ENCODE measurements at regions of chr19 and their contacts with region 1.

Region 1: GRCh38 chr19:45439569-45440254 is 16.0 kb upstream of the ERCC1 start:
- DNase-seq: peak; percentile 95
- ATAC-seq: peak; percentile 42
- H3K4me3 ChIP-seq: peak overlapping the region in 4 of 5 experiments; percentile 21 to 80 (median 60)
- H3K4me3 Mint-ChIP-seq: peak overlapping the region; percentile 85
- H3K27ac ChIP-seq: peak overlapping the region; percentile 48 to 82
- H3K27ac Mint-ChIP-seq: peak overlapping the region; percentile 91
- H3K4me1 ChIP-seq: peaks cover 31 to 36% of the 10 kb centered on the region in 2 donors
- H3K4me1 Mint-ChIP-seq: peaks cover 31% of the 10 kb centered on the region
- H3K27me3 ChIP-seq: no peaks in the 10 kb centered on the region
- H3K27me3 Mint-ChIP-seq: no peaks in the 10 kb centered on the region
- CTCF ChIP-seq: peak; percentile 100

Region 2: DNA sequence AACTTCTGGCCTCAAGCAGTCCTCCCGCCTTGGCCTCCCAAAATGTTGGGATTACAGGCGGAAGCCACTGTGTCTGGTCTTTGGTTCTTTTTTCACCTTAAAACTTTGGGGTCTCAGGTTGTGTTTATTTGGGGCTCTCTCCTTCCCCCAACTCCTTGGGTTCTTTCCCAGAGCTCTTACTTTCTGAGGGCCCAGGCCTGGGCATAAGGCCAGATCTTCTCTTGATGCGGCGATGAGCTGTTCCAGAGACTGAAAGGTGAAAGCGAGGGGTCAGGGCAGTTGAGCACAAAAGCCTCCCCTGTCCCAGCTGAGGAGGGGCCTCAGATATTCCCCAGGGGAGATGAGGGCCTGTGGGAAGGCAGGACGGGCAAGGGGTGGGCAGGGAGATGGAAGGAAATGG is 26.2 kb before region 1 on chr19:
- CTCF ChIA-PET with region 1: interaction called, 12 read pairs
- POLR2A ChIA-PET with region 1: no interaction called
- intact Hi-C with region 1: loop called (anchors 5 kb)
- DNase-seq: no peak
- ATAC-seq: no peak
- H3K4me3 ChIP-seq: no peak overlapping the region
- H3K4me3 Mint-ChIP-seq: no peak overlapping the region
- H3K27ac ChIP-seq: no peak overlapping the region
- H3K27ac Mint-ChIP-seq: no peak overlapping the region
- H3K4me1 ChIP-seq: peaks cover under 1 to 9% of the 10 kb centered on the region in 2 donors
- H3K4me1 Mint-ChIP-seq: peaks cover 10% of the 10 kb centered on the region
- H3K27me3 ChIP-seq: no peaks in the 10 kb centered on the region
- H3K27me3 Mint-ChIP-seq: no peaks in the 10 kb centered on the region
- CTCF ChIP-seq: no peak

Region 3: DNA sequence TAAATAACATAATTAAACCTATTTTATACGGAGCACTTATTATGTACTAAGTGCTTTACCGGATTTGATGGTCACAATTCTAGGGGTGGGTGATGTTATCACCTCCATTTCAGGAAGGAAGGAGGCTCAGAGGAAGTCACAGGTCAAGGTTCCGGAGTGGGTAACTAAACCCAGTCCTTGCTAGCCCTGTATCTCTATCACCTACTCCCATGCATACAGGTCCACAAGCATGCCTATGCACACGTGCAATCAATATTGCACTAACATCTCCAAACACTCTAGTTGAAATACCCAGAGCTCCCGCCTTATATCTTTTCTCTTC is 10.3 kb after region 1 on chr19:
- CTCF ChIA-PET with region 1: interaction called, 16 read pairs
- POLR2A ChIA-PET with region 1: interaction called, 8 read pairs
- intact Hi-C with region 1: no loop called
- DNase-seq: no peak
- ATAC-seq: peak; percentile 9
- H3K4me3 ChIP-seq: peak overlapping the region; percentile 13 to 89 (median 63)
- H3K4me3 Mint-ChIP-seq: peak overlapping the region; percentile 92
- H3K27ac ChIP-seq: peak overlapping the region; percentile 88 to 91
- H3K27ac Mint-ChIP-seq: peak overlapping the region; percentile 87
- H3K4me1 ChIP-seq: peaks cover 17 to 41% of the 10 kb centered on the region in 2 donors
- H3K4me1 Mint-ChIP-seq: peaks cover 57% of the 10 kb centered on the region
- H3K27me3 ChIP-seq: no peaks in the 10 kb centered on the region
- H3K27me3 Mint-ChIP-seq: no peaks in the 10 kb centered on the region
- CTCF ChIP-seq: no peak

Region 4: DNA sequence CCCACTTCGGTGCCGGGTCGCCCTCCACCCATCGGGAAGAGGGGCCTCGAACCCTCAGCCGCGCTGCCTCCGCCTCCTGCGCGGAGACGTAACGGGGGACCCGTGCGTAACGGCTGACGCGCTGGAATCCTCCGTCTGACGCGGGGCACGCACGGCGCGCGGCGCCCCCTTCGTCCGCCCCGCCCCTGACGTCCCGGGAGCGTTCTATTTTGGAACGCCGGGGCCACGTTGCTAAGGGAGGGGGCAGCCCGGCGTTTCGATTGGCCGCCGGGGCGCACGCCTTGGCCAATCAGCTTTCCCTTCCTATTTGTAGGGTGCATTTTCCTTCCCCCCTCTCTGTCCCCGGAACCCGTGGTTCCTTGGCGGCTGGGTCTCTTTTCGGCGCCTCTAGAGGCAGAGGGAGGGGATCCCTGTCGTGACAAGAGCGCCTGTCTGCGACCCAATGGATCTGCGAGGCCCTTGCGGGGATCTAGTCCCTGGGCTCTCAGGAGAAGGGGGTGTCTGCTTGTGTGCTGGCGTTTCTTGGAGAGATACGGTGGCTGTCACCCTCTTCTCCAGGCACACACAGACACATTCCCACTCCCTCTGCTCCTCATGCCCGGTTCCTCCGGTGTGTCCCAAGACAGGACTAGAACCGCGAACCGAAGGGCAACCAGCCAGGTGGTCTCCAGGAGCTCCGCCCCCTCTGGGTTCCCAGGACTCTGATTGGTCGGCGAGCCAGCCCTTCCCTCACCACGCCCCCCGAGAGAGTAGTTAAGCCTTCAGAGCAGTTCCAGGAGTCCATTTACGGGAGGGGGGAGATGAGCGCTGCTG is 29.6 kb after region 1 on chr19:
- CTCF ChIA-PET with region 1: interaction called, 453 read pairs
- POLR2A ChIA-PET with region 1: interaction called, 45 read pairs
- intact Hi-C with region 1: loop called (anchors 1 kb)
- DNase-seq: peak; percentile 97
- ATAC-seq: peak; percentile 57
- H3K4me3 ChIP-seq: peak overlapping the region; percentile 59 to 100 (median 95)
- H3K4me3 Mint-ChIP-seq: peak overlapping the region; percentile 92
- H3K27ac ChIP-seq: peak overlapping the region; percentile 96 to 100
- H3K27ac Mint-ChIP-seq: peak overlapping the region; percentile 95
- H3K4me1 ChIP-seq: peaks cover 38 to 57% of the 10 kb centered on the region in 2 donors
- H3K4me1 Mint-ChIP-seq: peaks cover 50% of the 10 kb centered on the region
- H3K27me3 ChIP-seq: peaks cover 0 to 33% (median 15%) of the 10 kb centered on the region in 4 experiments
- H3K27me3 Mint-ChIP-seq: peaks cover 24% of the 10 kb centered on the region
- CTCF ChIP-seq: no peak

Region 5: GRCh38 chr19:45485305-45486077 is 45.8 kb after region 1 on chr19:
- CTCF ChIA-PET with region 1: interaction called, 453 read pairs
- POLR2A ChIA-PET with region 1: interaction called, 5 read pairs
- intact Hi-C with region 1: loop called (anchors 1 kb)
- DNase-seq: peak; percentile 96
- ATAC-seq: peak; percentile 99
- H3K4me3 ChIP-seq: peak overlapping the region; percentile 38 to 80 (median 63)
- H3K4me3 Mint-ChIP-seq: peak overlapping the region; percentile 95
- H3K27ac ChIP-seq: no peak overlapping the region
- H3K27ac Mint-ChIP-seq: peak overlapping the region; percentile 76
- H3K4me1 ChIP-seq: peaks cover 3 to 9% of the 10 kb centered on the region in 2 donors
- H3K4me1 Mint-ChIP-seq: peaks cover 11% of the 10 kb centered on the region
- H3K27me3 ChIP-seq: no peaks in the 10 kb centered on the region
- H3K27me3 Mint-ChIP-seq: no peaks in the 10 kb centered on the region
- CTCF ChIP-seq: peak; percentile 92

Region 6: GRCh38 chr19:45506246-45506990 is 66.7 kb after region 1 on chr19:
- CTCF ChIA-PET with region 1: interaction called, 12 read pairs
- POLR2A ChIA-PET with region 1: no interaction called
- intact Hi-C with region 1: no loop called
- DNase-seq: peak; percentile 98
- ATAC-seq: peak; percentile 74
- H3K4me3 ChIP-seq: peak overlapping the region; percentile 63 to 96 (median 84)
- H3K4me3 Mint-ChIP-seq: peak overlapping the region; percentile 94
- H3K27ac ChIP-seq: peak overlapping the region; percentile 83 to 87
- H3K27ac Mint-ChIP-seq: peak overlapping the region; percentile 94
- H3K4me1 ChIP-seq: peaks cover 26 to 43% of the 10 kb centered on the region in 2 donors
- H3K4me1 Mint-ChIP-seq: peaks cover 54% of the 10 kb centered on the region
- H3K27me3 ChIP-seq: no peaks in the 10 kb centered on the region
- H3K27me3 Mint-ChIP-seq: no peaks in the 10 kb centered on the region
- CTCF ChIP-seq: peak; percentile 63

Region 7: DNA sequence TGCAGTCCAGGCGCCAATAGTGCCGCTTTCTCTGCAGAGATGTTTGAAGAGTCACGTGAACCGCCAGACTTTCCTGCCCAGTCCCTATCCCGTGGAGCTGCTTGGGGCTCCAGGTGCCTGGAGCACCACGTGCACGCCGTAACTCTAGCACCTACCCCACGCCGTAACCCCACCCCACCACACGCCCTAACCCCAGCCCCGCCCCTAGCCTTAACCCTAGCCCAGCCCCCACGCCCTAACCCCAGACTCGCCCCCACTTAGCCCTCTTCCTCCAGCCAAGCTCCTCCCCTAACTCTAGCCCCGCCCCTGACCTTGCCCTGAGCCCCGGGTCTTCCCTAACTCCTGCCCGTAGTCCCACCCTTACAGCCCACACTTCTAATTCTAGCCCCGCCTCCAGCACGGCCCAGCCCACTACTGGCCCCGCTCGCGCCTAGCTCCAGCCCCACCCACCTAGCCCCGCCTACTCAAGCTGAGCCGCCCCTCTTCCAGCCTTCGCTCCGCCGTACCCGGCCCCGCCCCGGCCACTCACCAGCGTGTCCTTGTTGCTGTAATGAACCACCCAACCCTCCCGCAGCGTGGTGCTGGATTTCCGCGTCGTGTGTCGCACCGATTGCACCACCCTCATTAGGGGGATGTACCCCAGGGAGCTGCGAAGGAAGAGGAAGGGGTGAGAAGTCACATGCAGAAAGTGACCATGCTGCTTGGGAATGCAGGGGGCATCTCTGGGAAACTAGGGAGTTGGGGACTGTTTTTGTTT is 1257.7 kb after region 1 on chr19:
- CTCF ChIA-PET with region 1: no interaction called
- POLR2A ChIA-PET with region 1: no interaction called
- intact Hi-C with region 1: no loop called
- DNase-seq: no peak
- ATAC-seq: peak; percentile 21
- H3K4me3 ChIP-seq: no peak overlapping the region
- H3K4me3 Mint-ChIP-seq: no peak overlapping the region
- H3K27ac ChIP-seq: no peak overlapping the region
- H3K27ac Mint-ChIP-seq: no peak overlapping the region
- H3K4me1 ChIP-seq: no peaks in the 10 kb centered on the region
- H3K4me1 Mint-ChIP-seq: peaks cover 3% of the 10 kb centered on the region
- H3K27me3 ChIP-seq: no peaks in the 10 kb centered on the region
- H3K27me3 Mint-ChIP-seq: no peaks in the 10 kb centered on the region
- CTCF ChIP-seq: no peak